AG04449 (cell line): ENCODE measurements at regions of chr17 and their contacts with region 1.

Region 1: GRCh38 chr17:2380226-2380922 is 20.5 kb downstream of the MNT start:
- DNase-seq: no peak
- H3K4me3 ChIP-seq: no peak overlapping the region
- CTCF ChIP-seq: no peak

Region 2: DNA sequence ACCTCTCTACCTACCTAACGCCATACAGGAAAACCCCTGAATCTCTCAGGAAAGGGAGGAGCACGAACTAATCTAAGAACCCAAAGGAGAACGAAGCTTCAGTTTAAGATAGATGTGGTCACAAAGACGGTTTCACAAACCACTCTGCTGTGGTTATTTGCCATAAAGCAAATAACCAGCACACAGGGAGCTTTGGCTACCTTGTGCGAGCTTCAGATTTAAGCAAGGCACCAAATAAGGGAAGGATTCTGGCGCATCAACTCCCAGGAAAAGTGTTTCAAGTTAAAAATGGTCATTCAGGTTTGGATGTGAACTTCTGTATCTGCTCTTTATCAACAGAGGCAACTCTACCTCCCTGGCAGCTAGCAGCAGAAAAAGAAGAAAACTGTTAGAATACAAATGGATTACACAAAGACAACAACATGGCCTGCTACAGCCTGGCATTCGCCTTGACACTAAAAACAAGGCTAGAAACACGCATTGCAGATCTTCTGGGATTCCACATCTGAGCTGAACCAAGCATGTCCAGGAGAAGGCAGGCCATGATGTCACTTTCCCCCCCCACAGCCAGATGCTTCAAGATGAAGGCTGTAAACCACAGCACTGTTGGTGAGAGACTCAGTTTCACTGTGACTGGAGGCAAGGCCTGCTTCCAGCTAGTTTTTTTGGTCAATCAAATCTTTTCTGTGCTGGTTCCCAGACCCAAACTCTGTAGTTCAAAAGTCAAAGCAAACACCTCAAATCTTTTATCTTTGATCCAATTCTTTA is 120.4 kb before region 1 on chr17:
- CTCF ChIA-PET with region 1: no interaction called
- POLR2A ChIA-PET with region 1: no interaction called
- DNase-seq: no peak
- H3K4me3 ChIP-seq: no peak overlapping the region
- CTCF ChIP-seq: no peak

Region 3: GRCh38 chr17:2309338-2310154 is 70.8 kb before region 1 on chr17:
- CTCF ChIA-PET with region 1: no interaction called
- POLR2A ChIA-PET with region 1: no interaction called
- DNase-seq: no peak
- H3K4me3 ChIP-seq: no peak overlapping the region
- CTCF ChIP-seq: no peak

Region 4: DNA sequence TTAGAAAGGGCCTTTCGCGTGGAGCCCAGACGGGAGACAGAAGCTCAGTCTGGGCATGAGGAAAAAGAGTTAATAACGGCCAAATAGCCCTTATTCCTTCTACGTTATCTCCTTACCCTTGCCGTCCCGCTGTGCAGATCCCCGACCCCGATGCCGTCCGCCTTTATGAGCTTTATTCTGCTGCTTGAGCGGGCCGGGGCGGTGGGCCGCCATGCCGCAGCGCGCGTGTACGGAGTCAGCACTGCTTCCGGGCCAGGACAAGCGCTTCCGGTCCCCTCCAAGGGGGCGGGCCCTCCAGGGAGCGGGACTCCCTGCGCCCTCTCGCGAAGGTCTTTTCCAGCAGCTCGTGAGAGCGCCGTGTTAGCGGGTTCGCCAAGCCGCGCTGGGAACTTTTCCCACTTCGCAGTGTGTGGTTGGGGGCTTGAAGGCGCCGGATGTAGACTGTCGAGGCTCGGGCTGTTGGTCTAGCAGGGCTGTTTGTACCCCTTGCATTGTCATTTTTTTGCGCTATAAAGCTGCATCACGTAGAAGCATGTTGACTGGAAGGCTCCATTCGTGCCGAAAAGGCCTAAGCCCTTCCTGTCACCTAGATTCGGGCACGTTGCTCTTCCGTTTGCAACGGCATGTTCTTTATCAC is 44.0 kb before region 1 on chr17 and contains the start of gene TSR1:
- CTCF ChIA-PET with region 1: interaction called, 13 read pairs
- POLR2A ChIA-PET with region 1: interaction called, 3 read pairs
- DNase-seq: peak; percentile 28
- H3K4me3 ChIP-seq: peak within 1 kb of the TSS; percentile 93
- CTCF ChIP-seq: peak; percentile 58

Region 5: DNA sequence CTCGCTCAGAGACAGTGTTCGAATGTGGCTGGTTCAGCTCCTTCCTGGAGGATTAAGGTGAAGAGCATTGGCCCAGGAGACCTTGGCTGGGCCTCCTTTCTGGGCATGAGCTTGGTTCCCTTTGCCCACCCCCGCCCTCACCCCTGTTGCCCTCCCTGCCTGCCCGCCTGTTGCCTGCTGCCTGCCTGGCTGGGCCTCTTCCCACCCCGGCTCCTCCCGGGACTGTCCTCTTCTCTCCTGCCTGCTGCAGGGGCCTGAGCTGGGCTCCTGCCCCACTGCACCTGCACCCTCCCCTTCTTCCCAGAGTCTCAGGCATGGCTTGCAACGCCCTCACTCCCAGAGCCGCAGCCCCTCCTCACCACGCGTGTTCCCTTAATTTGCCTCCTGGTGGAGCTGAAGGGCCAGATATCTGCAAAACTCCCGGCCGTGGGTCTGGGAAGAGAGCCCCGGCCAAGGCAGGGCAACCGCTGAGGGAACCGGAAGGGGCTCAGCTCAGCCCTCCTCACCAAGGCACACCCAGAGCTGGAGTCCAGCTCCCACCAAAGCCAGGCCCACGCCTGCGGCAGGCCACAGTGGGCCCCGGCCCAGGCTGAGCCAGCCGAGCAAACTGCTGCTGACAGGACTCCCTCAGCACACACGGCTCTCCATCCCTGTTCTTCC is 10.7 kb before region 1 on chr17:
- CTCF ChIA-PET with region 1: interaction called, 63 read pairs
- POLR2A ChIA-PET with region 1: interaction called, 4 read pairs
- DNase-seq: no peak
- H3K4me3 ChIP-seq: no peak overlapping the region
- CTCF ChIP-seq: no peak

Region 6: GRCh38 chr17:2392252-2393173 is 12.1 kb after region 1 on chr17:
- CTCF ChIA-PET with region 1: interaction called, 91 read pairs
- POLR2A ChIA-PET with region 1: interaction called, 11 read pairs
- DNase-seq: no peak
- H3K4me3 ChIP-seq: peak overlapping the region; percentile 62
- CTCF ChIP-seq: no peak

Region 7: DNA sequence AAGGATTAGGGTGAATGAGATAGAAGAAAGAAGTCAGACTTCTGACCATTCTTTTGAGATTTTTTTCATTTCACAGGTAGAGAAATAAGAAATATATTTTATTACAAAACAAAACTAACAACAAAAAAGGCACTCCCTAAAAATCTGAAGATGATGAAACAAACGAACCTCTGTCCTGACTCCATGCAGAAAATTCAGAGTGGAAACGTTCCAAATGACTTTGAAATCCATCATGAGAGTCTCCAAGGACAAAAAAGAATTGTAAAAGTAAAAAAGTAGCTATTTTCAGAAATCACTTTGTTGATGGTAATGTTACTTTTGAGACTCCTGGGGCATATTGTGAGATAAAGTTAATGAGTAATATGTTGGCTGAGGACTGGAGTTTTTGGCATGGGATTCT is 46.8 kb after region 1 on chr17:
- CTCF ChIA-PET with region 1: interaction called, 871 read pairs
- POLR2A ChIA-PET with region 1: no interaction called
- DNase-seq: no peak
- H3K4me3 ChIP-seq: no peak overlapping the region
- CTCF ChIP-seq: no peak

Region 8: GRCh38 chr17:2435181-2435741 is 54.9 kb after region 1 on chr17:
- CTCF ChIA-PET with region 1: interaction called, 23 read pairs
- POLR2A ChIA-PET with region 1: no interaction called
- DNase-seq: no peak
- H3K4me3 ChIP-seq: no peak overlapping the region
- CTCF ChIP-seq: no peak